PC-3 (cell line): ENCODE measurements at regions of chr15 and their contacts with region 1.

Region 1: GRCh38 chr15:65086017-65086679 is 9.6 kb downstream of the KBTBD13 start:
- DNase-seq: peak; percentile 55
- ATAC-seq: peak; percentile 80
- H3K4me3 ChIP-seq: no peak overlapping the region
- H3K27ac ChIP-seq: no peak overlapping the region
- H3K4me1 ChIP-seq: no peaks in the 10 kb centered on the region
- H3K27me3 ChIP-seq: no peaks in the 10 kb centered on the region
- CTCF ChIP-seq: peak; percentile 62

Region 2: DNA sequence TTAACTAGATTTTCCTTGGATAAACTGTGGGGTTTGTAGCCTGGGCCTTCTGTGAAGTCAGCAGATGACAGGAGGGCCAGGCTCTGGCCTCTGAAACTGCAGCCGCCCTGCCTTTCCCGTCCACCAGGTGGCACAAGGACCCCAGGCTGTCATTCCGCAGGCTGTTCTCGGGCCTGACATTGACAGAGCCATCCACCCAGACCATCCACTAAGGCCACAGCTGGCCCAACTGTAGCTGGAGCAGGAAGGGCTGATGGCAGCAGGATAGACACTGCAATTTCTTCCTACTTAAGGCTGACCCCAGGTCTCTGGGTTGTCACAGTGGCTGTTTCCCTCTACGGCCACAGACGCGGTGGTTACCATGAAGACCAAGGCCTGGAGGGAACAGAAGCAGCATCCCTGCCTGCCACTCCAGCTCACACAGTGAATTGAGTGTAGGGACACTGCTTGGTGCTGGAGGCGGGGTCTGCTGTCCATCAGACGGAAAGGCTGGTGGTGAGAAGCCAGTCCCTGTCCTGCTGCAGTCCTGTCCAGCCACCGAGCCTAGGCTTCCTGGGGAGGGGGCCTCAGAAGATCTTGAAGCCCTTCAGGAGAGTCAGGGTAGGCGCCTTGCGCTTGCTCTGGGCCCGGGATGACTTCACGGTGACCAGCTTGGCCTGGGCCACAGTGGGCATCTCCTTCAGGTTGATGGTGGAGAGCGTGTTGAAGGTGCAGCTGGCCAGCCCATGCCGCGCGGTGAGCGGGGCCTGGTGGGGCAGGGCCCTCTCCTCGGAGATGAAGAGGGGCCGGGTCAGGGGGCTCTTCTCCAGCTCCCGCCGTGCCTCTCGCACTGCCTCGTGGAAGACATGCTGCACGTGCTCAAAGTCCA is 31.6 kb before region 1 on chr15:
- CTCF ChIA-PET with region 1: no interaction called
- POLR2A ChIA-PET with region 1: no interaction called
- intact Hi-C with region 1: loop called (anchors 2 kb)
- DNase-seq: peak; percentile 65
- ATAC-seq: peak; percentile 80
- H3K4me3 ChIP-seq: no peak overlapping the region
- H3K27ac ChIP-seq: no peak overlapping the region
- H3K4me1 ChIP-seq: peaks cover 22% of the 10 kb centered on the region
- H3K27me3 ChIP-seq: no peaks in the 10 kb centered on the region
- CTCF ChIP-seq: peak; percentile 79

Region 3: DNA sequence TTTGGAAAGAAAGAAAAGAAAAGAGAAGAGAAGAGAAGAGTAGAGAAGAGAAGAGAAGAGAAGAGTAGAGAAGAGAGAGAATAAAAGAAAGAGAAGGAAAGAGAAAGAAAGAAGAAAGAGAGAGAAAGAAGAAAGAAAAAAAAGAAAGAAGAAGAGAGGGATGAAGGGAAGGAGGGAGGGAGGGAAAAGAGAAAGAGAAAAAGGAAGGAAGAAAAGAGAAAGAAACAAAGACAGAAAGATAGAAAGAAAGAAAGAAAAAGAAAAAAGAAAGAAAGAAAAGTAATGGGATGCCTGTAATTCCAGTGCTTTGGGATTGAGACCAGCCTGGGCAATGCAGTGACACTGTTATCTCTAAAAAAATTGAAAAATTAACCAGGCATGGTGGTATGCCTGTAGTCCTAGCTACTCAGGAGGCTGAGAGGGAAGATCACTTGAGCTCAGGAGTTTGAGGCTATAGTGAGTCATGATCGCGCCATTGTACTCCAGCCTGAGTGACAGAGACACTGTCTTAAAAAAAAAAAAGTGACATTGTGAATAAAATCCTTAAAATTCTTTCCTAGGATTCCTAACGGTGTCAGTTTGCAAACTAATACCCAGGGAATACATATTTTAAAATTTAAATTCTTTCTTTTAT is 20.0 kb before region 1 on chr15:
- CTCF ChIA-PET with region 1: no interaction called
- POLR2A ChIA-PET with region 1: interaction called, 22 read pairs
- intact Hi-C with region 1: no loop called
- DNase-seq: no peak
- ATAC-seq: no peak
- H3K4me3 ChIP-seq: no peak overlapping the region
- H3K27ac ChIP-seq: no peak overlapping the region
- H3K4me1 ChIP-seq: no peaks in the 10 kb centered on the region
- H3K27me3 ChIP-seq: no peaks in the 10 kb centered on the region
- CTCF ChIP-seq: no peak